ENCODE measurements at regions of chr5 and their contacts with region 1.

Region 1: GRCh38 chr5:148826053-148826738 is at the start of gene ADRB2:
- DNase-seq: peak; percentile 55
- ATAC-seq: peak; percentile 97
- H3K4me3 ChIP-seq: peak within 1 kb of the TSS; percentile 37 to 63 (median 54); a peak in 5 of 6 replicates
- H3K27ac ChIP-seq: no peak within 1 kb of the TSS
- H3K4me1 ChIP-seq: peaks cover 8% of the 10 kb centered on the region
- H3K27me3 ChIP-seq: peaks cover 2 to 7% of the 10 kb centered on the region in 2 experiments; a peak in 4 of 5 replicates
- CTCF ChIP-seq: no peak
- EP300 ChIP-seq: no peak
- POLR2A ChIP-seq: no peak
- RAD21 ChIP-seq: no peak
- total RNA-seq, gene ADRB2: not detected in 2 replicates

Region 2: DNA sequence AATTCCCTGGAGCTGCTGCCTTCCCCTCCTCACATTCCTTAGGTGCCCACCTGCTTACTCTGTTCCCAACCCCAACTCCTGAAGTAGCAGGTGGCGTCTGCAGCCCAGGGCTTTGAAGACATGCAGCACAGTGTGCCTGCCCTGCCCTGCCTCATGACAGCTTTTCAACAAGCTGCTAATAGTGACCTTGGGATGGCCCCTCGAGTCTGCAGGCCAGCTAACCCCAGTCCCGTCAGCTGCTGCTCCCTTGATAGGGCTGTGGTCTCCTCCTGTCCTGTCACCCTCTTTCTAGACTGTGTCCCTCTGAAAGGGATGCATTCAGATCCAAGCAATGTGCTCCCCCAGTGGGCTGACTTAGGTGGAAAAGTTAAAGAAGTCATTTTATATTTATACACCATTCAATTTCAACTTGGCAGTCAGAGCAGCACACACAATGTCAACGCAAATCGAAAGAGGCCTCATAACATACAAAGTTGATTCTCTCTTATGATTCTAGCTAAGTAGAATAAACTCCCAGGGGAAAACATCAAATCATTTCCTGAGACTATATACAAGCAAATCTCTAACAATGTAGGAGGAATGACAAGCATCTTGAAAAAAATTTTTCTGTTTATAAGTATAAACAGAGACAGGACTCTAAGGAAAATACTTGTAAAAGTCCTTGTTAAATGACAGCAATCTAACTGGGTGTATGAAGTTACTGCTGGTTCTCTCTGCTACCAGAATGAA is 38.1 kb after region 1 on chr5:
- CTCF ChIA-PET with region 1: no interaction called
- POLR2A ChIA-PET with region 1: no interaction called
- in situ Hi-C with region 1: no loop called
- intact Hi-C with region 1: no loop called
- DNase-seq: no peak
- ATAC-seq: no peak
- H3K4me3 ChIP-seq: no peak overlapping the region
- H3K27ac ChIP-seq: no peak overlapping the region
- H3K4me1 ChIP-seq: no peaks in the 10 kb centered on the region
- H3K27me3 ChIP-seq: no peaks in the 10 kb centered on the region
- CTCF ChIP-seq: no peak
- EP300 ChIP-seq: no peak
- POLR2A ChIP-seq: no peak
- RAD21 ChIP-seq: no peak

Region 3: DNA sequence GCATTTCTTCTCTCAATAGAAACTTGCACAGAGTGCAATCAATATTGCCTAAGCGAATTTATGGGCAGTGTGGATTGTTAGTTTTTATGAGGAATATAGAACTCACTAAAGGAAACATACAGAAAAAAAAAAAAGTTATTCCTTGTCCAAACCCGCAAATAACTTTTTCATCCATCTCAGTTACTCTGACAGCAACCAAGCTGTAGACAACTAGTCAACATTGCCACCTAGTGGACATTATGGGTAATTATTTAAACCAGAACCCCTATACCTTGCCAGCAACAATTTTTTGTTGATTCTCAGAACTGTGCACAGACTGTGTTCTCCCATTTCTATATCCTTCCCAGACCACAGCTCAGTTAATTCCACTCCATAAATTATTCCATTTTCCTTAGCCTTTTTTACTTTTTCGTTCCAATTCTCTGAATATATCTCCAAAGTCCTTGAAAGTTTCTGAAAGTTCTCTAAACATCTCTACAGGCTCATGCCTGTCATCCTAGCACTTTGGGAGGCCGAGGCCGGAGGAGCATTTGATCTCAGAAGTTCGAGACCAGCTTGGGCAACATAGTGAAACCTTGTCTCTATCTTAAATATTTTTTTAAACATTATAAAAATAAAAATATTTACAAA is 442.8 kb after region 1 on chr5:
- CTCF ChIA-PET with region 1: no interaction called
- POLR2A ChIA-PET with region 1: no interaction called
- in situ Hi-C with region 1: no loop called
- intact Hi-C with region 1: loop called (anchors 10 kb)
- DNase-seq: peak; percentile 49
- ATAC-seq: no peak
- H3K4me3 ChIP-seq: no peak overlapping the region
- H3K27ac ChIP-seq: no peak overlapping the region
- H3K4me1 ChIP-seq: peaks cover 29% of the 10 kb centered on the region
- H3K27me3 ChIP-seq: peaks cover 7 to 23% of the 10 kb centered on the region in 2 experiments
- CTCF ChIP-seq: peak; percentile 71
- EP300 ChIP-seq: no peak
- POLR2A ChIP-seq: no peak
- RAD21 ChIP-seq: no peak